Activated CD4-positive, alpha-beta T cell treated with anti-CD3 and anti-CD28 coated beads for 36 hours (primary cell): ENCODE measurements at regions of chr15 and their contacts with region 1.

Region 1: DNA sequence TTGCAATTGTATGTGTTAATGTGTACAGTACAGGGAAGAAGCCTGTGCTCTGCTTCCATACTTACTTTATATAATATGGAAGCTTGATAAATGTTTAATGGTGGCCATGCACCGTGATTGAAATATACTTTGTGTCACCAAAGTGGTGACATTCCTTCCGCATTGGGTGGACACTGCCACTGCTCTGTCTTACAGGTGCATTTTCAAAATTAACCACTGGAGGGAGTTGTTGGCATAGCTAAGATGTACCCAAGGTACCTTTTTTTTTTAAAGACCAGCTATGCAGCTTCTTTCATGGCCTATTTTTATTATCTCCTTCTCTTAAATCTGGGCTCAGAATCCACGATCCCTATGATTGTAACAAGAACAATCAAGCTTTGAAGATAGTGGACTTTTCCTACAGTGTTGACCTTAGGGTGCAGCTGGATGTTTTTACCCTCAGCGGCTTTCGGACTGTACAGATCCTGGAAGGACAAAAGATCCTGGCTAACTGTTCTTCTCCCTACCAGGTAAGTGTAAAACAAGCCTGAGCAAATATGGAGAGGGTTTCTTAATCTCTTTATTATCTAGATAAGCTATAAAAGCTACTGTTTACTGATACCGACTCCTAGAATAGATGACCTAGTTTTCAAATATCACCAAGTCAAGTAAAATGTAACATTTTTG is 21.6 kb upstream of the PAK6 start:
- DNase-seq: peak; percentile 50
- ATAC-seq: peak; percentile 91
- H3K4me3 Mint-ChIP-seq: no peak overlapping the region
- H3K27ac Mint-ChIP-seq: no peak overlapping the region
- H3K4me1 Mint-ChIP-seq: no peaks in the 10 kb centered on the region
- H3K27me3 Mint-ChIP-seq: no peaks in the 10 kb centered on the region

Region 2: DNA sequence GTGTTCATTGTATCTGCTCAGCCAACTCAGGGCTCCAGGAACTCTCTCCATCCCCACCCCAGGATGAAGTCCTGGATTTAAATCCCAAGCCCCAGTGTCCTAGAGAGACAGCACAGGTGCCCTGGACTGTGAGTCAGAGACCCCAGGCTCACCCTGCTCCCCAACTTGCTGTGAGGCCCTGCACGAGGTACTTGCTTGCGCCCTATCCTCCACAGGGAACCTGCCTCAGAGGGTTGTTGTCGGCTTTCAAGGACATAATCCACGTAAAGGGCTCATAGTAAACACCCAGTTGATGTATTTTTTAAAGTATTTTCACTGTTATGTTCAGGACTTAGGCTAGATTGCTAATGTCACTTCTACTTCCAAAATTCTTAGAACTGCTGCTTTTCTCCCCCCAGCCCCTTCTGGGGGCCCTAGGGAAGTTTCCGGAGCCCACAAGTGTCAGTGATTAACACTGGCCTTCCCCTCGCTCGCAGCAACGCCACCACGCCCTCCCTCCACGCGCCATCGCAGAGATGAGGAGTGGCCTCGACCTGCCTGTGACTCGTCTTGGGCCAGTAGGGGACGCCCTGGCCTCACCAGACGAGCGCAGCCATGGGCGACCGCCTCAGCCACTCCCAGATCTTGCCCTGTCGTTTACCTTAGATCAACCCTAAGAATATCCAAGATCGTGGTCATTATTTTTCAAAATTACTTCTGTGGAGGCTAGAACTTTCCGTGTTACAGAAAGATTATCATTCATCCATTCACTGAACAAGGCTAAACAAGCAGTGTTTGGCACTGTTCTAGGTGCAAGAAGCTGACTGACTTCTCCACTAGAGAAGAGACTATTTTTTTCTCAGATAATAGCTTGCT is 172.3 kb before region 1 on chr15:
- CTCF ChIA-PET with region 1: interaction called, 11 read pairs
- POLR2A ChIA-PET with region 1: no interaction called
- intact Hi-C with region 1: loop called (anchors 1 to 5 kb)
- DNase-seq: peak; percentile 94
- ATAC-seq: peak; percentile 75
- H3K4me3 Mint-ChIP-seq: peak overlapping the region; percentile 46
- H3K27ac Mint-ChIP-seq: peak overlapping the region; percentile 47
- H3K4me1 Mint-ChIP-seq: peaks cover 76% of the 10 kb centered on the region
- H3K27me3 Mint-ChIP-seq: no peaks in the 10 kb centered on the region

Region 3: DNA sequence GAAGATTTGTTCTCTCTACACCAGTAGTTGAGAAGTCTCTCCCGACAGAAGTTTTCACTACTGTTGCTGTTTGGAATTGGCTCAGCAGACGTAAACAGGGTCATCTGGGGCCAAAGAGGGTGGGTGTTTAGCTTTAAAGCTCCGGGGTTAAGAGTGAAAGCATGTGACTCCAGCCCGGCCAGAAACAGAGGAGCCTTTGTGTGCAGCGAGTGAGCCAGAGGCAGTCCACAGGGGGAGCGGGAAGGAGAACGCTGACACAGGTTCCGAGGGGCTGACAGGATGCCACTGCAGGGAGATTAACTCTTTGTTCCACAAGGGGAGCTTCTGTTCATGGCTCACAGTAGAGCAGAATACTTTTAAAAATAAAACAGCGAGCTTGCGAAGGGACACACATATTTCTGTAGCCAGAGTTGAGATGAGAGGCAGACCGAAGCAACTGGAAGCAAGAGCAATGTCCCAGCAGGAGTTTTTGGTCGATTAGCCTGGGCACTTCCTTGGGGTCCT is 135.5 kb before region 1 on chr15:
- CTCF ChIA-PET with region 1: no interaction called
- POLR2A ChIA-PET with region 1: no interaction called
- intact Hi-C with region 1: no loop called
- DNase-seq: peak; percentile 42
- ATAC-seq: peak; percentile 48
- H3K4me3 Mint-ChIP-seq: peak overlapping the region; percentile 23
- H3K27ac Mint-ChIP-seq: peak overlapping the region; percentile 8
- H3K4me1 Mint-ChIP-seq: peaks cover 43% of the 10 kb centered on the region
- H3K27me3 Mint-ChIP-seq: peaks cover 23% of the 10 kb centered on the region

Region 4: GRCh38 chr15:40183636-40184463 is 33.4 kb before region 1 on chr15:
- CTCF ChIA-PET with region 1: interaction called, 10 read pairs
- POLR2A ChIA-PET with region 1: no interaction called
- intact Hi-C with region 1: no loop called
- DNase-seq: no peak
- ATAC-seq: no peak
- H3K4me3 Mint-ChIP-seq: no peak overlapping the region
- H3K27ac Mint-ChIP-seq: peak overlapping the region; percentile 5
- H3K4me1 Mint-ChIP-seq: peaks cover 27% of the 10 kb centered on the region
- H3K27me3 Mint-ChIP-seq: no peaks in the 10 kb centered on the region

Region 5: DNA sequence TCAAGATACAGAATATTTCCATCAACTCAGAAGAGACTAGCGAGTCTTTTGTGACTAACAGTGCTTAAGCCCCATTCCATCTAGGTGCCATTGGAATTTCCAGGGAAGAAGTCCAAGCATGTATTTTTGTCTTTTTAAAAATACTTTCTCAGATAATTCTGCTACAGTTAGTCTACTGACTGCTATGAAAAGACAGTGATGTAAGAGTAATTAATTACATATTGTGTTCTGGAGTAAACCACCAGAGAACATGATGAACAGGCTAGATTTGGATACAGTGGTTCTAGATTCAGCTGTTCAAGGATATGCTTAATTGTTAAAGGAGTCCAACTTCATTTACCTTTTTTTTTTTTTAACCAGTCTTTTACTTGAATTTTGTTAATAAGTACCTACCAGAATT is 13.2 kb before region 1 on chr15:
- CTCF ChIA-PET with region 1: interaction called, 24 read pairs
- POLR2A ChIA-PET with region 1: no interaction called
- intact Hi-C with region 1: no loop called
- DNase-seq: no peak
- ATAC-seq: no peak
- H3K4me3 Mint-ChIP-seq: no peak overlapping the region
- H3K27ac Mint-ChIP-seq: no peak overlapping the region
- H3K4me1 Mint-ChIP-seq: peaks cover under 1% of the 10 kb centered on the region
- H3K27me3 Mint-ChIP-seq: no peaks in the 10 kb centered on the region

Region 6: GRCh38 chr15:40263024-40263754 is 45.9 kb after region 1 on chr15:
- CTCF ChIA-PET with region 1: interaction called, 18 read pairs
- POLR2A ChIA-PET with region 1: no interaction called
- intact Hi-C with region 1: no loop called
- DNase-seq: no peak
- ATAC-seq: no peak
- H3K4me3 Mint-ChIP-seq: no peak overlapping the region
- H3K27ac Mint-ChIP-seq: no peak overlapping the region
- H3K4me1 Mint-ChIP-seq: no peaks in the 10 kb centered on the region
- H3K27me3 Mint-ChIP-seq: no peaks in the 10 kb centered on the region